Posterior vena cava (tissue), 2 donors: ENCODE measurements at regions of chr19 and their contacts with region 1.

Region 1: GRCh38 chr19:18846862-18847548 is 15.2 kb downstream of the UPF1 start:
- DNase-seq: peak; percentile 95

Region 2: GRCh38 chr19:18450931-18451845 is 395.8 kb before region 1 on chr19:
- intact Hi-C with region 1: loop called in 1 of 2 experiments (anchors 5 kb)
- DNase-seq: peak; percentile 95

Region 3: DNA sequence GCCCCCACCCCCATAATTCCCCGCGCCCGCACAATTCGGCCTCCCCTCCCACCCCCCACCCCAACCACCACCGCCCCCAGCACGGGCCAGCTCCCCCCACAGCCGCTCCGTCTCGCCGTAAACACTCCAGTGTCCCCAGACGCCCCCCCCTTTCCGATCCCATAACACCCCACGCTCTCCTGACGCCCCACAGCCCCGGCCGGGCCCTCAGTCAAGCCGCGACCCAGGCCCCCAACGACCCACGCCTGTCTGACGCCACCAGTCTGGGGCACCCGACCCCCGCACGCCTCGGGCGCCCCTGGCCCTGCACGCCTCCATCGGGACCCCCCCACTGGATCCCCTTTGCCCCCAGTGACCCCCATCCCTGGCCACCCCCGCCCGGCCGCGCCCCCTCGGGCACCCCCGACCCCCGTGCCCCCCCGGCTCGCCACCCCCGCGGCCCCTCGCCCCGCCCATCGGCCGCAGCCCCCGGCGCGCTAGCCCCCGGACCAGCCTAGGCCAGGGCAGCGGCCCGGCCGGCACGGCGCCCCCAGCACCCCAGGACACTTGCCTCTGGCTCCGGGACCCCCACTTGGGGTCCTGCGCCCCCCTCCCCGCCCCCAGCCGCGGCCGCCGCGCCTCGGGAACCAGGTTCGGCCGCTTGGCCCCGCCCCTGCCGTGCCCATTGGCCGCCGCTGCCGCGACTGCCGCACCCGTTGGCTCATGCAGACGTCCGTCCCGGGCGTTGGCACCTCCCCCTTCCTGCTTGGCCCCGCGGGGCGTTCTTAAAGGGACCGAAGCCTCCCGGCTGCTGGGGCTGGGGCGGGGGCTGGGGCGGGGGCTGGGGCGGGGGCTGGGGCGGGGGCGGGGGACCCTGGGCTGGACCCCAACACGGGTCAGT is 303.8 kb before region 1 on chr19 and contains the start of gene FKBP8:
- intact Hi-C with region 1: no loop called
- DNase-seq: peak; percentile 98
- total RNA-seq, gene FKBP8: 189 to 224 TPM

Region 4: DNA sequence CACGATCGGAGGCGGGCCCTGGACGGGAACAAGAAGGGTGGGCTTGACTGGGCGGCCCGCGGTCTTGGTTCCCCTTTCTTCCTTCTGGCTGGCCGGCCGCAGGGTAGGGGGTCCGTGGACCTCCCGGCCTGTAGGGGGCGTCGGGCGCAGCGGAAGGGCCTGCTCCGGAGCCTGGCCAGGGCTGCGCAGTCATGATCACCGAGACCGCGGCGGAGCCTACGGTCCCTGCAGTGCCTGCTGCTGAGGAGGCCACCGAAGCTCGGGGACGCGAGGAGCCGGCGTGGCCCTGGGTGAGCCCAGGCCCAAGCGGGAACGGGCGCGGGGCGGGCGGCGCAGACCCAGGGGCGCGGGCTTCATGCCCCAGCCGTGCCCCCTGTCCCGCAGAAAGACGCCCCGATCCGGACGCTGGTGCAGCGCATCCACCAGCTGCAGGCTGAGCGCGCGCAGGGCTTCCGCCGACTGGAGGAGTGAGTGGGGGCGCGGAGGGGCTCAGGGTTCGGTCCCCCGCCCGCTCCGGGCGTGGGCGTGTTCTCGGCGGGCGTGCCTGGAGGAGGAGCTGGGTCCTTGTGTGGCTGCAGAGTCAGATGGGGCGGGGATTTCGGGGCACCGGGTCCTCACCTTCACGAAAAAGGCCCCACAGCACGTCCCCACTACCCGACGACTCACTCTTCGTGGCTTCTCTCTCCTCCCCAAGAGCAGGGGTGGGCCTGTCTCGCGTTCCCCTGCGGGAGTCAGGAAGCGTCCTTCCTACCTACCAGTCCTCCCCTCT is 258.2 kb before region 1 on chr19 and contains the start of gene REX1BD:
- intact Hi-C with region 1: loop called (anchors 2 to 10 kb)
- DNase-seq: peak; percentile 97
- total RNA-seq, gene REX1BD: 38.0 to 48.1 TPM